CD8-positive, alpha-beta T cell (primary cell): ENCODE measurements at regions of chr1 and their contacts with region 1.

Region 1: DNA sequence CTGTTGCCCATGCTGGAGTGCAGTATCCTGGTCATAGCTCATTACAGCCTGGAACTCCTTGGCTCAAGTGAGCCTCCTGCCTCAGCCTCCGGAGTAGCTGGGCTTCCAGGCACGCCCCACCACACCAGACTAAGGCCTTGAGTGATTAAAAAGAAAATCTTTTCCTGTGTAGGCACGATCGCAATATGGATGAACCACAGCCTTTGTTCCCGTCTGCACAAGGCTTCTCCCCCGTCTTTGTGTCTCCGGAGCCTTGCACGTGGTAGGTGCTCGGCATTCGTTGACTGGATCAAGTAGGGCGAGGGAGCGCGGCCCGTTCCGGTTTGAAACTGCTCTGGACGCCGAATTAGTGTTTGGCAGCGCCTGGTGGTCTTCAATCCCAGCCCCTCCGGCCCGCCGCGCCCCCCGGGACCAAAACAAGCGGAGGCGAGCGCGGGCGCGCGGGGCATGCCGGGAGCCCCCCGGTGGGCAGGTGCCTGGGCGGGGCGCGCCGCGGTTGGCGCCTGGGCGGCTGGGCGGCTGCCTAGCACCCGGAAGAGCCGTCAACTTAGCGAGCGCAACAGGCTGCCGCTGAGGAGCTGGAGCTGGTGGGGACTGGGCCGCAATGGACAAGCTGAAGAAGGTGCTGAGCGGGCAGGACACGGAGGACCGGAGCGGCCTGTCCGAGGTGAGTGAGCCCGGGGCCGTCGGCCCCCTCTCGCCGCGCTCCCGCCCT is at the start of gene SFT2D2:
- DNase-seq: peak; percentile 46 to 89 (median 77)
- ATAC-seq: peak; percentile 98
- H3K4me3 ChIP-seq: peak within 1 kb of the TSS; percentile 90 to 93
- H3K4me3 Mint-ChIP-seq: peak within 1 kb of the TSS; percentile 94
- H3K27ac ChIP-seq: peak within 1 kb of the TSS; percentile 71 to 75
- H3K27ac Mint-ChIP-seq: peak within 1 kb of the TSS; percentile 93
- H3K4me1 ChIP-seq: peaks cover 37% of the 10 kb centered on the region
- H3K4me1 Mint-ChIP-seq: peaks cover 49% of the 10 kb centered on the region
- H3K27me3 ChIP-seq: no peaks in the 10 kb centered on the region
- H3K27me3 Mint-ChIP-seq: peaks cover 3% of the 10 kb centered on the region
- CTCF ChIP-seq: no peak
- total RNA-seq, gene SFT2D2: 61.2 to 62.3 TPM

Region 2: GRCh38 chr1:167737169-167737568 is 488.5 kb before region 1 on chr1:
- CTCF ChIA-PET with region 1: no interaction called
- POLR2A ChIA-PET with region 1: no interaction called
- intact Hi-C with region 1: no loop called
- DNase-seq: no peak
- ATAC-seq: no peak
- H3K4me3 ChIP-seq: no peak overlapping the region
- H3K4me3 Mint-ChIP-seq: no peak overlapping the region
- H3K27ac ChIP-seq: no peak overlapping the region
- H3K27ac Mint-ChIP-seq: no peak overlapping the region
- H3K4me1 ChIP-seq: no peaks in the 10 kb centered on the region
- H3K4me1 Mint-ChIP-seq: no peaks in the 10 kb centered on the region
- H3K27me3 ChIP-seq: no peaks in the 10 kb centered on the region
- H3K27me3 Mint-ChIP-seq: no peaks in the 10 kb centered on the region
- CTCF ChIP-seq: no peak

Region 3: GRCh38 chr1:168178638-168179437 is 46.8 kb before region 1 on chr1 and contains the start of gene TIPRL:
- CTCF ChIA-PET with region 1: no interaction called
- POLR2A ChIA-PET with region 1: interaction called, 4 read pairs
- intact Hi-C with region 1: loop called (anchors 1 to 2 kb)
- DNase-seq: peak; percentile 84 to 97 (median 93)
- ATAC-seq: peak; percentile 86
- H3K4me3 ChIP-seq: peak within 1 kb of the TSS; percentile 98 to 100
- H3K4me3 Mint-ChIP-seq: no peak within 1 kb of the TSS
- H3K27ac ChIP-seq: peak within 1 kb of the TSS; percentile 95 to 97
- H3K27ac Mint-ChIP-seq: no peak within 1 kb of the TSS
- H3K4me1 ChIP-seq: peaks cover 15% of the 10 kb centered on the region
- H3K4me1 Mint-ChIP-seq: peaks cover 12% of the 10 kb centered on the region
- H3K27me3 ChIP-seq: no peaks in the 10 kb centered on the region
- H3K27me3 Mint-ChIP-seq: peaks cover 7% of the 10 kb centered on the region
- CTCF ChIP-seq: peak; percentile 49
- total RNA-seq, gene TIPRL: 15.0 to 18.3 TPM

Region 4: GRCh38 chr1:168195199-168196135 is 30.2 kb before region 1 on chr1:
- CTCF ChIA-PET with region 1: no interaction called
- POLR2A ChIA-PET with region 1: no interaction called
- intact Hi-C with region 1: no loop called
- DNase-seq: no peak
- ATAC-seq: no peak
- H3K4me3 ChIP-seq: no peak overlapping the region
- H3K4me3 Mint-ChIP-seq: no peak overlapping the region
- H3K27ac ChIP-seq: no peak overlapping the region
- H3K27ac Mint-ChIP-seq: no peak overlapping the region
- H3K4me1 ChIP-seq: no peaks in the 10 kb centered on the region
- H3K4me1 Mint-ChIP-seq: no peaks in the 10 kb centered on the region
- H3K27me3 ChIP-seq: no peaks in the 10 kb centered on the region
- H3K27me3 Mint-ChIP-seq: no peaks in the 10 kb centered on the region
- CTCF ChIP-seq: no peak

Region 5: GRCh38 chr1:168386949-168387586 is 161.4 kb after region 1 on chr1:
- CTCF ChIA-PET with region 1: no interaction called
- POLR2A ChIA-PET with region 1: no interaction called
- intact Hi-C with region 1: no loop called
- DNase-seq: peak; percentile 54 to 89 (median 73)
- ATAC-seq: peak; percentile 91
- H3K4me3 ChIP-seq: peak overlapping the region in 1 of 2 experiments; percentile 2
- H3K4me3 Mint-ChIP-seq: peak overlapping the region; percentile 58
- H3K27ac ChIP-seq: no peak overlapping the region
- H3K27ac Mint-ChIP-seq: peak overlapping the region; percentile 27
- H3K4me1 ChIP-seq: peaks cover 3% of the 10 kb centered on the region
- H3K4me1 Mint-ChIP-seq: peaks cover 25% of the 10 kb centered on the region
- H3K27me3 ChIP-seq: no peaks in the 10 kb centered on the region
- H3K27me3 Mint-ChIP-seq: peaks cover 6% of the 10 kb centered on the region
- CTCF ChIP-seq: no peak

Region 6: GRCh38 chr1:169106095-169106920 is 880.7 kb after region 1 on chr1 and contains the start of gene ATP1B1:
- CTCF ChIA-PET with region 1: no interaction called
- POLR2A ChIA-PET with region 1: no interaction called
- intact Hi-C with region 1: loop called in 1 of 2 experiments (anchors 5 kb)
- DNase-seq: peak; percentile 59 to 88 (median 78)
- ATAC-seq: peak; percentile 89
- H3K4me3 ChIP-seq: peak within 1 kb of the TSS; percentile 65 to 74
- H3K4me3 Mint-ChIP-seq: peak within 1 kb of the TSS; percentile 91
- H3K27ac ChIP-seq: no peak within 1 kb of the TSS
- H3K27ac Mint-ChIP-seq: peak within 1 kb of the TSS; percentile 23
- H3K4me1 ChIP-seq: peaks cover 24% of the 10 kb centered on the region
- H3K4me1 Mint-ChIP-seq: peaks cover 33% of the 10 kb centered on the region
- H3K27me3 ChIP-seq: peaks cover 0 to 2% of the 10 kb centered on the region in 2 experiments
- H3K27me3 Mint-ChIP-seq: peaks cover 4% of the 10 kb centered on the region
- CTCF ChIP-seq: peak; percentile 29
- total RNA-seq, gene ATP1B1: 2.6 to 3.0 TPM